Sigmoid colon (tissue), 7 donors: ENCODE measurements at regions of chr19 and their contacts with region 1.

Region 1: DNA sequence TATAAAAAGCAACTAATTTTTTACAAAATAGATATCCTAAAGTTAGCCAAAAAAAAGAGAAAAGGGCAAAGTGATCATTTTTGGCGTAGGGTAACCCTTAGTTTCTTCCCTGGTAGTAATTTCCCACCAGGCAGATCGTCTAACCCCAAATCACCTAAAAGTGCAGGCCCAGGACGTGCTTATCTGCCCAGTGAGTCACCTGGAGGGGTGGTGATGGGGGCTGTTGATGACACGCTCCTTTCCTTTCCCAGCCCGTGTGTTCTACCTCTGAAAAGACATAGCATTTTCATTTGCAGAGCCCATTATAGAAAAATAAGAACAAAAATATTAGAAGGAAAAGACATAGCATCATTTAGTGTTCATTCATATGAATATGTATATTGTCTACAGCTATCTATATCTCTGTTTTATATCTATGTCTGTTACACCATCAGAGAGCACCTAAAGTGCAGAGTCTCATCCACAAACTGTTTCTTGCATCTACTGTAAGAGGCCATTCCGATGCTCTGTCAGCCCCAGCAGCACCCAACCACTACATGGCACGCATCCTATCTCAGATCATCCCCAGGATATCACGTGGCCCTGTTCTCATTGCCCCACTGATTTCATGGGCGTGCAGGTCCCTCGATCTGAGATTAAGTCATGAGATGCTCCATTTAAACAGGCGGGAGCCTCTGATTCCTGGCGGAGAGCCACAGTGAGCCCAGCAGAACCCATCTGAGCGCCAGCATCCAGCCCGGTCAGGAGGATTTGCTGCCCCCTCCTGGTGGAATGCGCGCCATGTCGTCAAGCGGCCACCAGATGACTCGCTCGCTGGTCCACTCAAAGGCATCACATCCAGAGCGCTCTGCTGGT is 8.5 kb upstream of the LILRB3 start:
- DNase-seq: peak; percentile 92
- H3K4me3 ChIP-seq: no peak overlapping the region
- H3K27ac ChIP-seq: no peak overlapping the region
- H3K4me1 ChIP-seq: no peaks in the 10 kb centered on the region
- H3K27me3 ChIP-seq: peaks cover 0 to 14% (median 7%) of the 10 kb centered on the region in 3 donors
- CTCF ChIP-seq: peak; percentile 76 to 89 (median 82)
- EP300 ChIP-seq: no peak
- POLR2A ChIP-seq: no peak

Region 2: GRCh38 chr19:54121259-54121658 is 110.0 kb before region 1 on chr19:
- intact Hi-C with region 1: no loop called
- DNase-seq: no peak
- H3K4me3 ChIP-seq: no peak overlapping the region
- H3K27ac ChIP-seq: no peak overlapping the region
- H3K4me1 ChIP-seq: peaks cover 2 to 14% (median 9%) of the 10 kb centered on the region in 4 donors
- H3K27me3 ChIP-seq: no peaks in the 10 kb centered on the region
- CTCF ChIP-seq: no peak
- EP300 ChIP-seq: no peak
- POLR2A ChIP-seq: no peak

Region 3: GRCh38 chr19:54168174-54168917 is 63.0 kb before region 1 on chr19:
- intact Hi-C with region 1: loop called (anchors 1 kb)
- DNase-seq: peak; percentile 94
- H3K4me3 ChIP-seq: no peak overlapping the region
- H3K27ac ChIP-seq: no peak overlapping the region
- H3K4me1 ChIP-seq: peaks cover 0 to 14% (median 10%) of the 10 kb centered on the region in 4 donors
- H3K27me3 ChIP-seq: peaks cover 9 to 50% (median 33%) of the 10 kb centered on the region in 3 donors
- CTCF ChIP-seq: peak; percentile 48 to 94 (median 86)
- EP300 ChIP-seq: no peak
- POLR2A ChIP-seq: no peak

Region 4: GRCh38 chr19:54189735-54190502 is 41.4 kb before region 1 on chr19:
- intact Hi-C with region 1: loop called (anchors 5 kb)
- DNase-seq: peak; percentile 100
- H3K4me3 ChIP-seq: peak overlapping the region; percentile 62 to 95 (median 88)
- H3K27ac ChIP-seq: peak overlapping the region; percentile 94 to 99 (median 98)
- H3K4me1 ChIP-seq: peaks cover 0 to 28% (median 26%) of the 10 kb centered on the region in 4 donors
- H3K27me3 ChIP-seq: no peaks in the 10 kb centered on the region
- CTCF ChIP-seq: no peak
- EP300 ChIP-seq: peak in 1 of 4 donors; percentile 7
- POLR2A ChIP-seq: peak; percentile 41 to 49

Region 5: DNA sequence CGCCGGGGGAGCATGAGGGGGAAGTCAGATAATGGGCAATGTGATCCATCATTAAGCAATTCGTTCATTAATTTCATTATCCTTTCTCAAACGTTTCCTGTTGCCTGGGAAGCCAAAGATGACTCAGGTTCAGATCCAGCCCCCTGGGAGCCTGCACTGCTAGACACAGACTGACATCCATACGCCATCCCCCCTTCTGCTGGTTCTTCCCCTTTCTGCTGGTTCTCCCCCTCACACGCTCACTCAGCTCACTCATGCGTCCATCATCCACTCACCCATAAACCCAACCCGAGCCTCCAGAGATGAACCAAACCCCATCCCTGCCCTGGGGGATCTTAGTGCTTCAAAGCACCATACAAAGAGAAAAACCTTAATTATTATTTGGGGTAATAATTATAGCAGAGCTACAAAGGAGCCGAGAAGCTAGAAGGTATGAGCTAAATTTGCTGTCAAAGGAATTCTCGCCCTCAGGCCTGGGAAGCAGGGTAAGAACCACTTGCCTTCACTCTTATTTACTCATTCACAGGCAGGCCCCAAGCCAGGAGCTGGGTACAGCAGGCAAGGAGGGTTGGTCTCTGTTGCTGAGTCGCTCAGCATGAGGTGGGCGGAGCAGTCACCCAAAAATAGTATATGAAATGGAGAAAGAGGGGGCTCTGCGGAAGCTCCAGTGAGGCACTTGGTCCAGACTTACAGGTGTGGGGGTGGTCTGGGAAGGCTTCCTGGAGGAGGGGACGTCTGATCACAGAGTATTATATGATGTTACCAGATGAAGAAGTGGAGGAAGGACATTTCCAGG is 1902.8 kb after region 1 on chr19:
- intact Hi-C with region 1: no loop called
- DNase-seq: no peak
- H3K4me3 ChIP-seq: no peak overlapping the region
- H3K27ac ChIP-seq: no peak overlapping the region
- H3K4me1 ChIP-seq: peaks cover 0 to 12% (median 10%) of the 10 kb centered on the region in 4 donors
- H3K27me3 ChIP-seq: no peaks in the 10 kb centered on the region
- CTCF ChIP-seq: no peak
- EP300 ChIP-seq: no peak
- POLR2A ChIP-seq: no peak